PC-9 (cell line): ENCODE measurements at regions of chr14 and their contacts with region 1.

Region 1: GRCh38 chr14:23555882-23556699 is at the start of gene THTPA:
- DNase-seq: peak; percentile 81 to 85
- H3K4me3 ChIP-seq: peak within 1 kb of the TSS; percentile 81
- H3K27ac ChIP-seq: peak within 1 kb of the TSS; percentile 37; the same call in 1 of the 2 replicates
- H3K4me1 ChIP-seq: no peaks in the 10 kb centered on the region; the same call in 1 of the 2 replicates
- H3K27me3 ChIP-seq: no peaks in the 10 kb centered on the region
- CTCF ChIP-seq: no peak
- total RNA-seq, gene THTPA: 3.4 and 4.1 TPM in 2 replicates

Region 2: GRCh38 chr14:23327947-23328744 is 227.9 kb before region 1 on chr14:
- CTCF ChIA-PET with region 1: interaction called, 3 read pairs
- POLR2A ChIA-PET with region 1: interaction called, 9 read pairs
- intact Hi-C with region 1: loop called (anchors 5 kb)
- DNase-seq: peak; percentile 35 to 36
- H3K4me3 ChIP-seq: no peak overlapping the region
- H3K27ac ChIP-seq: no peak overlapping the region
- H3K4me1 ChIP-seq: peaks cover 3% of the 10 kb centered on the region; the same call in 1 of the 2 replicates
- H3K27me3 ChIP-seq: 0 out of 2 replicates have a peak, but pooled peaks cover 8% of the 10 kb centered on the region
- CTCF ChIP-seq: peak; percentile 77

Region 3: GRCh38 chr14:23567192-23568020 is 11.3 kb after region 1 on chr14 and contains the start of gene AP1G2:
- CTCF ChIA-PET with region 1: interaction called, 16 read pairs
- POLR2A ChIA-PET with region 1: no interaction called
- intact Hi-C with region 1: no loop called
- DNase-seq: peak; percentile 71 to 90
- H3K4me3 ChIP-seq: peak within 1 kb of the TSS; percentile 79
- H3K27ac ChIP-seq: peak within 1 kb of the TSS; percentile 53; the same call in 1 of the 2 replicates
- H3K4me1 ChIP-seq: peaks cover 24% of the 10 kb centered on the region
- H3K27me3 ChIP-seq: no peaks in the 10 kb centered on the region
- CTCF ChIP-seq: no peak
- total RNA-seq, gene AP1G2: 128 and 160 TPM in 2 replicates

Region 4: DNA sequence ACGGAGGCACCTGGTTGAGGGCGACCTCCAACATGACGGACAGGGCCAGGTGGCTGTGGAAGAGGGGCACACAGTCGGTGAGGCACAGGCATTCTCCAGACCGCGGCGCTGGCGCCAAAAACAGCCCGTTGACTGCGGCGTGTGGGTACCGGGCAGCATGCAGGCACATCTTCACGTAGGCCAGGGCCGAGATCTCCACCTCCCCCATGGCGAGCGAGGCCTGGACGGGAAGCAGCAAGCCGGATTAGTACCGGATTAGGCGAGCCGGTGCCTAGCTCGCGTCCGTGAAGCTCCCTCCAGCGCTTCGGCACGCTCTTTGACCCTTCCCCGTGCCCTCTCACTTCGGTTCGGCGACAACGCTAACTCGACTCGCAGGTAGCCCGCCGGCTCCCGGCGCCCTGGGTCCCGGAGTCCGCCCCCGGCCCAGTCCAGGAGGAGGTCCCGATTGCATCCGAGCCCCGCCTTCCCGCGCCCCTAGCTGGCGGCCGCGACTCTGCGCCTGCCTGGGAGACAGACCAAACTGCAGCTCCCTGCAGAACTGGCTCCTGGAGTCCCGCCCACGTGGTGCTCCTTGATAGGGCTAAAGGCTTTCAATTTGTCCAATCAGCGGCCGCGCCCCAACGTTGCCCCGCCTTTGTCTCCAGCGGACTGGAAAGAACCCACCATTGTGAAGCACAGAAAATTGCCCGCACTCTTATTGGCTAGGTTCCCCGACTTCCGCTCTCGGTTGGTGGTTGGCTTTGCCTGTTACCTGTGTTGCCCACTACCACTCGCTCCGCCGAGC is 585.2 kb after region 1 on chr14 and contains the start of gene EMC9:
- CTCF ChIA-PET with region 1: no interaction called
- POLR2A ChIA-PET with region 1: interaction called, 14 read pairs
- intact Hi-C with region 1: no loop called
- DNase-seq: peak; percentile 88 to 91
- H3K4me3 ChIP-seq: peak within 1 kb of the TSS; percentile 74
- H3K27ac ChIP-seq: peak within 1 kb of the TSS; percentile 38
- H3K4me1 ChIP-seq: peaks cover 23% of the 10 kb centered on the region
- H3K27me3 ChIP-seq: no peaks in the 10 kb centered on the region
- CTCF ChIP-seq: no peak
- total RNA-seq, gene EMC9: 27.4 and 37.1 TPM in 2 replicates